ENCODE measurements at regions of chr3 and their contacts with region 1.

Region 1: DNA sequence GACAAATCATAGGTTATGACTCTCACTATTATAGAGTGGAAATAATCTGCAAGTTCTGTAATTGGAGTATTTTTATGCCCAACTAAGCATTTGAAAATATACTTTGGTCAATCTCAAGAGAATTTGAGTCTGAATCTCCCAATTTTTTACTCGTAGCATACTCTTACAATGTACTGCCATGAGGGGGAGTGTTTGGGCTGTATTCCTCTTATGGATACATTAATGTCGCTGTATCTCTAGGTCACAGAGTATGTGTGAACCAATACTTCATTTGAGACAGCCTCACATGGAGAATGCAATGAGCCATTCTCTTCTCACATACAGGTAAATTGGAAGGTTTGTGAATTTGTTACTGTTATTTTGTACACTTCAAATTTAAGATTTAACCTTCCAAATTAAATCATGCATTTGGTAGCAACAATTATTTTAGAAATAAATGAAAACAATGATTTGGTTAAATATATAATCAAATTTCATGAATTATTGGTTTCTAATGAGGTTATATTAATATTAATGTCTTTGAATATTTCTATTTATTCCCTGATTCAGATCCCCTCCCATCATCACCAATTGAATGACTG is 5.5 kb upstream of the CD200 start:
- DNase-seq: peak in 23 of 35 experiments; percentile 8 to 79 (median 35)
- ATAC-seq: peak; percentile 91 to 100 (median 94)
- H3K4me3 ChIP-seq: no peak overlapping the region
- H3K4me3 Mint-ChIP-seq: no peak overlapping the region
- H3K27ac ChIP-seq: no peak overlapping the region
- H3K27ac Mint-ChIP-seq: no peak overlapping the region
- H3K4me1 ChIP-seq: no peaks in the 10 kb centered on the region
- H3K4me1 Mint-ChIP-seq: peaks cover 0 to 4% (median 1%) of the 10 kb centered on the region in 3 donors
- H3K27me3 ChIP-seq: peaks cover 0 to 4% of the 10 kb centered on the region in 2 experiments
- H3K27me3 Mint-ChIP-seq: peaks cover 4 to 8% of the 10 kb centered on the region in 2 donors

Region 2: DNA sequence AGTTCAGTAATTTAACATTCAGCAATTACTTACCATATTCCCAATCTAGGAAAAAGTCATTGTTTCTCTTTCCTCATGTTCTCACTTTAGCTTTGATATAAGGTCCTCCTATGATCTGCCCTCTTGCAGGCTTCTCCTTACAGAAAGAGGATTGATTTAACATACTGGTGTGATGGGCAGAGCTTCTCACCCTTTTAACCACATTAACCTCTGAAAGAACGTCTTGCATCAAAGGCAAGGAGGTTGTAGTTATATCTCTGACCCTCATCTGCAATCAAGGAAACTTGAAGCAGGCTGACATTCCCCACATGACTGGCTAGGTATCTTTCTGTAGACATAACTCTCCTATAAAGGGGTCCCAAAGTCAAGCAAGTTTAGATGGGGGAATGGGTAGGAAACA is 132.3 kb after region 1 on chr3:
- CTCF ChIA-PET with region 1: interaction called in 1 of 2 experiments, 4 read pairs
- POLR2A ChIA-PET with region 1: interaction called in 1 of 2 experiments, 13 read pairs
- DNase-seq: peak in 1 of 35 experiments; percentile 23
- ATAC-seq: peak in 1 of 4 experiments; percentile 11
- H3K4me3 ChIP-seq: no peak overlapping the region
- H3K4me3 Mint-ChIP-seq: peak overlapping the region in 1 of 3 donors; percentile 61
- H3K27ac ChIP-seq: peak overlapping the region; percentile 27
- H3K27ac Mint-ChIP-seq: peak overlapping the region; percentile 66 to 89
- H3K4me1 ChIP-seq: peaks cover 15 to 39% of the 10 kb centered on the region in 2 experiments
- H3K4me1 Mint-ChIP-seq: peaks cover 49 to 69% (median 58%) of the 10 kb centered on the region in 3 donors
- H3K27me3 ChIP-seq: no peaks in the 10 kb centered on the region
- H3K27me3 Mint-ChIP-seq: no peaks in the 10 kb centered on the region

Region 3: DNA sequence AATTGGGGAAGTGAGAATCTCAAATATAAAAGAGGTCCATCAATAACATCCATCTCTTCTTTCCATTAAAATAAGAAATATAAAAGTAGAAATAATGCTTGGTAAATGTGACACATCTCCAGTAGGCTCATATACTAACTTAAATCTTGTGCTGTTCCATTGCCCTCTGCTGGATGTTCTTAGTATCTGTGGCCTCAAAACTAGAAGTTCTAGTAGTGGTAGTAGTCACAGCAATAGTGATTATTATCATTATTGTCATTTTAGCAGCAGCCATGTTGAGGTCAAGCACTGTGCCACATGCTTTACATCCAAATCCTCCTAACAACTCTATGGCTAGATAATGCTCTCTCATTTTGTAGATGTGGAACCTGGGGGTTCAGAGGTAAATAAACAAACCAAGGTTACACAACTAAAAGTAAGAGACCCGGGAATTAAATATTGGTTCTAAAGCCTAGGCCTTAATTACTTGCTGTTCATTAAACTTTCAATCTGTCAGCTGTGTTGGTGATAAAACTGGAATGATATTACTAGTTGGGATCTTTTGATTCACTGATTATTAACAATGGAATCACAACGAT is 192.1 kb after region 1 on chr3:
- CTCF ChIA-PET with region 1: interaction called, 8 to 15 read pairs
- POLR2A ChIA-PET with region 1: no interaction called
- DNase-seq: peak in 22 of 35 experiments; percentile 1 to 76 (median 26)
- ATAC-seq: peak; percentile 73 to 85 (median 80)
- H3K4me3 ChIP-seq: no peak overlapping the region
- H3K4me3 Mint-ChIP-seq: no peak overlapping the region
- H3K27ac ChIP-seq: no peak overlapping the region
- H3K27ac Mint-ChIP-seq: no peak overlapping the region
- H3K4me1 ChIP-seq: peaks cover 0 to 7% of the 10 kb centered on the region in 2 experiments
- H3K4me1 Mint-ChIP-seq: peaks cover 19 to 23% (median 20%) of the 10 kb centered on the region in 3 donors
- H3K27me3 ChIP-seq: no peaks in the 10 kb centered on the region
- H3K27me3 Mint-ChIP-seq: no peaks in the 10 kb centered on the region

Region 4: GRCh38 chr3:112531358-112531781 is 203.9 kb after region 1 on chr3:
- CTCF ChIA-PET with region 1: interaction called in 1 of 2 experiments, 13 read pairs
- POLR2A ChIA-PET with region 1: interaction called in 1 of 2 experiments, 10 read pairs
- DNase-seq: peak in 1 of 35 experiments; percentile 60
- ATAC-seq: no peak
- H3K4me3 ChIP-seq: no peak overlapping the region
- H3K4me3 Mint-ChIP-seq: no peak overlapping the region
- H3K27ac ChIP-seq: no peak overlapping the region
- H3K27ac Mint-ChIP-seq: peak overlapping the region; percentile 57 to 75
- H3K4me1 ChIP-seq: no peaks in the 10 kb centered on the region
- H3K4me1 Mint-ChIP-seq: peaks cover 0 to 4% (median 3%) of the 10 kb centered on the region in 3 donors
- H3K27me3 ChIP-seq: no peaks in the 10 kb centered on the region
- H3K27me3 Mint-ChIP-seq: no peaks in the 10 kb centered on the region